Endothelial cell of umbilical vein (primary cell): ENCODE measurements at regions of chr5 and their contacts with region 1.

Region 1: GRCh38 chr5:154405078-154405792 is 40.6 kb upstream of the SAP30L start:
- DNase-seq: peak; percentile 76
- H3K4me3 ChIP-seq: peak overlapping the region in 1 of 3 experiments; percentile 6
- H3K27ac ChIP-seq: no peak overlapping the region
- H3K4me1 ChIP-seq: no peaks in the 10 kb centered on the region
- H3K27me3 ChIP-seq: no peaks in the 10 kb centered on the region
- CTCF ChIP-seq: peak; percentile 88 to 95
- POLR2A ChIP-seq: no peak

Region 2: GRCh38 chr5:154077696-154078095 is 327.5 kb before region 1 on chr5:
- CTCF ChIA-PET with region 1: interaction called, 175 read pairs
- POLR2A ChIA-PET with region 1: interaction called, 4 read pairs
- dilution Hi-C with region 1: no loop called
- intact Hi-C with region 1: loop called (anchors 1 kb)
- DNase-seq: no peak
- H3K4me3 ChIP-seq: no peak overlapping the region
- H3K27ac ChIP-seq: no peak overlapping the region
- H3K4me1 ChIP-seq: no peaks in the 10 kb centered on the region
- H3K27me3 ChIP-seq: peaks cover 0 to 4% of the 10 kb centered on the region in 2 experiments
- CTCF ChIP-seq: no peak
- POLR2A ChIP-seq: no peak

Region 3: GRCh38 chr5:154189819-154190594 is 215.2 kb before region 1 on chr5:
- CTCF ChIA-PET with region 1: interaction called, 100 read pairs
- POLR2A ChIA-PET with region 1: no interaction called
- dilution Hi-C with region 1: no loop called
- intact Hi-C with region 1: loop called (anchors 1 kb)
- DNase-seq: peak; percentile 55
- H3K4me3 ChIP-seq: peak overlapping the region; percentile 51 to 80 (median 56)
- H3K27ac ChIP-seq: peak overlapping the region; percentile 61
- H3K4me1 ChIP-seq: peaks cover 19% of the 10 kb centered on the region
- H3K27me3 ChIP-seq: no peaks in the 10 kb centered on the region
- CTCF ChIP-seq: peak; percentile 49 to 69
- POLR2A ChIP-seq: peak; percentile 56

Region 4: GRCh38 chr5:154228696-154229095 is 176.5 kb before region 1 on chr5:
- CTCF ChIA-PET with region 1: interaction called, 10 read pairs
- POLR2A ChIA-PET with region 1: interaction called, 6 read pairs
- dilution Hi-C with region 1: no loop called
- intact Hi-C with region 1: no loop called
- DNase-seq: no peak
- H3K4me3 ChIP-seq: no peak overlapping the region
- H3K27ac ChIP-seq: no peak overlapping the region
- H3K4me1 ChIP-seq: no peaks in the 10 kb centered on the region
- H3K27me3 ChIP-seq: no peaks in the 10 kb centered on the region
- CTCF ChIP-seq: no peak
- POLR2A ChIP-seq: no peak

Region 5: DNA sequence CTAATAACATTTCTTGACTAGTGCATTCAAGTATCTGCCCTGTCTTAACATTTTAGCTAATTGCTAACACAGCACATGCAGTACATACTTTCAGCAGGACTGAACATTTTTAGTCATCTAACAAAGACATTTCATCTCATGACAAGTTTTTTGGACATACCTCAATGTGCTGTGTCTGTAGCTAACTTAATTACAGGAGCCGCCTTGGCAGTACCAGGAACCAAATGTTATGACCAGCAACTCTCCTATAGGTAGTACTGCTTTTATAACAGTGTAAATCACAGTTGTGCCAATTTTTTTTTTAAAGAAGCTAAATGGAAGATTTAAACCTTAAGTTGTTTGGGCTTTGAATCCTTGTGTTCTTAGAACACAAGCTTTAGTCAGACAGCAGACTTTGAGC is 58.8 kb before region 1 on chr5:
- CTCF ChIA-PET with region 1: no interaction called
- POLR2A ChIA-PET with region 1: no interaction called
- dilution Hi-C with region 1: no loop called
- intact Hi-C with region 1: loop called (anchors 2 kb)
- DNase-seq: no peak
- H3K4me3 ChIP-seq: no peak overlapping the region
- H3K27ac ChIP-seq: no peak overlapping the region
- H3K4me1 ChIP-seq: peaks cover under 1% of the 10 kb centered on the region
- H3K27me3 ChIP-seq: no peaks in the 10 kb centered on the region
- CTCF ChIP-seq: no peak
- POLR2A ChIP-seq: no peak

Region 6: GRCh38 chr5:154610321-154611154 is 205.3 kb after region 1 on chr5:
- CTCF ChIA-PET with region 1: interaction called, 4 read pairs
- POLR2A ChIA-PET with region 1: no interaction called
- dilution Hi-C with region 1: no loop called
- intact Hi-C with region 1: loop called (anchors 1 kb)
- DNase-seq: peak; percentile 62
- H3K4me3 ChIP-seq: peak overlapping the region in 2 of 3 experiments; percentile 19 to 20
- H3K27ac ChIP-seq: no peak overlapping the region
- H3K4me1 ChIP-seq: peaks cover 4% of the 10 kb centered on the region
- H3K27me3 ChIP-seq: peaks cover 22 to 39% of the 10 kb centered on the region in 2 experiments
- CTCF ChIP-seq: peak; percentile 83 to 91
- POLR2A ChIP-seq: no peak

Region 7: GRCh38 chr5:154690489-154690888 is 285.3 kb after region 1 on chr5:
- CTCF ChIA-PET with region 1: no interaction called
- POLR2A ChIA-PET with region 1: no interaction called
- dilution Hi-C with region 1: no loop called
- intact Hi-C with region 1: no loop called
- DNase-seq: no peak
- H3K4me3 ChIP-seq: no peak overlapping the region
- H3K27ac ChIP-seq: no peak overlapping the region
- H3K4me1 ChIP-seq: peaks cover 2% of the 10 kb centered on the region
- H3K27me3 ChIP-seq: no peaks in the 10 kb centered on the region
- CTCF ChIP-seq: no peak
- POLR2A ChIP-seq: no peak